MCF 10A (cell line): ENCODE measurements at regions of chr11 and their contacts with region 1.

Region 1: DNA sequence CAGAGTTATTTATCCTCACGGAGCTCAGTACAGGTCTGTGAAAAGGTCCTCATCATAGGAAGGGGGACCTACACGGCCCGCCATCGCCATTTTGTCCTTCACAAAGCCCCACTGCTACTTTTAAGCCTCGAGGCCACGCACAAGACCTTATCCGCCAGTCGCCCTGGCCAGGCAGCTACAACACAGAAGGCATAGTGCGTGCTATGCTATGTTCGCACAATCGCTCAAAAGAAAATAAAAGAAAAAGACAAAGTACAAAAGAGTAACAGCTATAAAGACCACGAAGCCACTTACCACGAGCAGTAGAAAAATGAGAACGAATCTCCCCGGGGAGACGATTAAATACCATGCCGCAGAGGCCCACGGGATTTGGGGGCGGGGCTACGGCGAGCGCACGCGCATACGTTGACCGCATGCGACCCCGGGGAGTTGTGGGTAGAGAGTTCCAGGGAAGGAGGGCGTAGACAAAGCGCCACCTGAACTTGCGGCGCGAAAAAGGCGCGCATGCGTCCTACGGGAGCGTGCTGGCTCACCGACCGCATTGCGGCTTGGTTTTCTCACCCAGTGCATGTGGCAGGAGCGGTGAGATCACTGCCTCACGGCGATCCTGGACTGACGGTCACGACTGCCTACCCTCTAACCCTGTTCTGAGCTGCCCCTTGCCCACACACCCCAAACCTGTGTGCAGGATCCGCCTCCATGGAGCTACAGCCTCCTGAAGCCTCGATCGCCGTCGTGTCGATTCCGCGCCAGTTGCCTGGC is 16.4 kb upstream of the WDR74 start:
- DNase-seq: peak; percentile 98
- H3K4me3 Mint-ChIP-seq: peak overlapping the region; percentile 94
- H3K27ac Mint-ChIP-seq: peak overlapping the region; percentile 64
- H3K4me1 Mint-ChIP-seq: peaks cover 35% of the 10 kb centered on the region
- H3K27me3 Mint-ChIP-seq: no peaks in the 10 kb centered on the region
- CTCF ChIP-seq: no peak

Region 2: GRCh38 chr11:62573592-62574362 is 282.0 kb before region 1 on chr11 and contains the start of gene EEF1G:
- CTCF ChIA-PET with region 1: no interaction called
- POLR2A ChIA-PET with region 1: interaction called, 14 read pairs
- intact Hi-C with region 1: no loop called
- DNase-seq: peak; percentile 100
- H3K4me3 Mint-ChIP-seq: peak within 1 kb of the TSS; percentile 100
- H3K27ac Mint-ChIP-seq: peak within 1 kb of the TSS; percentile 100
- H3K4me1 Mint-ChIP-seq: peaks cover 30% of the 10 kb centered on the region
- H3K27me3 Mint-ChIP-seq: no peaks in the 10 kb centered on the region
- CTCF ChIP-seq: no peak
- total RNA-seq, gene EEF1G: 1,510 and 1,855 TPM in 2 replicates

Region 3: GRCh38 chr11:62715150-62716135 is 140.3 kb before region 1 on chr11:
- CTCF ChIA-PET with region 1: no interaction called
- POLR2A ChIA-PET with region 1: no interaction called
- intact Hi-C with region 1: no loop called
- DNase-seq: no peak
- H3K4me3 Mint-ChIP-seq: no peak overlapping the region
- H3K27ac Mint-ChIP-seq: no peak overlapping the region
- H3K4me1 Mint-ChIP-seq: peaks cover 15% of the 10 kb centered on the region
- H3K27me3 Mint-ChIP-seq: no peaks in the 10 kb centered on the region
- CTCF ChIP-seq: no peak

Region 4: GRCh38 chr11:62753736-62754603 is 101.8 kb before region 1 on chr11 and contains the start of gene ZBTB3:
- CTCF ChIA-PET with region 1: no interaction called
- POLR2A ChIA-PET with region 1: interaction called, 22 read pairs
- intact Hi-C with region 1: no loop called
- DNase-seq: peak; percentile 100
- H3K4me3 Mint-ChIP-seq: peak within 1 kb of the TSS; percentile 98
- H3K27ac Mint-ChIP-seq: peak within 1 kb of the TSS; percentile 96
- H3K4me1 Mint-ChIP-seq: peaks cover 3% of the 10 kb centered on the region
- H3K27me3 Mint-ChIP-seq: no peaks in the 10 kb centered on the region
- CTCF ChIP-seq: no peak
- total RNA-seq, gene ZBTB3: 7.1 and 11.6 TPM in 2 replicates

Region 5: GRCh38 chr11:62805076-62805892 is 50.5 kb before region 1 on chr11 and contains the start of gene NXF1:
- CTCF ChIA-PET with region 1: interaction called, 3 read pairs
- POLR2A ChIA-PET with region 1: interaction called, 59 read pairs
- intact Hi-C with region 1: no loop called
- DNase-seq: peak; percentile 93
- H3K4me3 Mint-ChIP-seq: peak within 1 kb of the TSS; percentile 95
- H3K27ac Mint-ChIP-seq: peak within 1 kb of the TSS; percentile 99
- H3K4me1 Mint-ChIP-seq: peaks cover 20% of the 10 kb centered on the region
- H3K27me3 Mint-ChIP-seq: no peaks in the 10 kb centered on the region
- CTCF ChIP-seq: no peak
- total RNA-seq, gene NXF1: 47.6 and 53.3 TPM in 2 replicates

Region 6: DNA sequence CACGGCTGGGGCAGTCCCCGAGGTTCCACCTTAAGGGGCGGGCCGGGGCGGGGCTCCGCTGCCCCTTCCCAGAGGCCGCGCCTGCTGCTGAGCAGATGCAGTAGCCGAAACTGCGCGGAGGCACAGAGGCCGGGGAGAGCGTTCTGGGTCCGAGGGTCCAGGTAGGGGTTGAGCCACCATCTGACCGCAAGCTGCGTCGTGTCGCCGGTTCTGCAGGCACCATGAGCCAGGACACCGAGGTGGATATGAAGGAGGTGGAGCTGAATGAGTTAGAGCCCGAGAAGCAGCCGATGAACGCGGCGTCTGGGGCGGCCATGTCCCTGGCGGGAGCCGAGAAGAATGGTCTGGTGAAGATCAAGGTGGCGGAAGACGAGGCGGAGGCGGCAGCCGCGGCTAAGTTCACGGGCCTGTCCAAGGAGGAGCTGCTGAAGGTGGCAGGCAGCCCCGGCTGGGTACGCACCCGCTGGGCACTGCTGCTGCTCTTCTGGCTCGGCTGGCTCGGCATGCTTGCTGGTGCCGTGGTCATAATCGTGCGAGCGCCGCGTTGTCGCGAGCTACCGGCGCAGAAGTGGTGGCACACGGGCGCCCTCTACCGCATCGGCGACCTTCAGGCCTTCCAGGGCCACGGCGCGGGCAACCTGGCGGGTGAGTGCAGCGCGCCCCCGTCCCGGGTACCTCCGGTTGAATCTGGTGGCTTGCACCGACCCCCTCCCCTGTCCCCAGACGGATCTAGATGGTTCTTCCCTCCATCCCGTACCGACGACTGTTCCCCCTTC is 25.2 kb after region 1 on chr11 and contains the start of gene SLC3A2:
- CTCF ChIA-PET with region 1: interaction called, 31 read pairs
- POLR2A ChIA-PET with region 1: interaction called, 152 read pairs
- intact Hi-C with region 1: loop called (anchors 2 kb)
- DNase-seq: peak; percentile 91
- H3K4me3 Mint-ChIP-seq: peak within 1 kb of the TSS; percentile 100
- H3K27ac Mint-ChIP-seq: peak within 1 kb of the TSS; percentile 99
- H3K4me1 Mint-ChIP-seq: peaks cover 47% of the 10 kb centered on the region
- H3K27me3 Mint-ChIP-seq: no peaks in the 10 kb centered on the region
- CTCF ChIP-seq: peak; percentile 70
- total RNA-seq, gene SLC3A2: 838 and 896 TPM in 2 replicates

Region 7: GRCh38 chr11:63369165-63369970 is 513.6 kb after region 1 on chr11 and contains the start of gene SLC22A9:
- CTCF ChIA-PET with region 1: no interaction called
- POLR2A ChIA-PET with region 1: no interaction called
- intact Hi-C with region 1: no loop called
- DNase-seq: no peak
- H3K4me3 Mint-ChIP-seq: no peak within 1 kb of the TSS
- H3K27ac Mint-ChIP-seq: no peak within 1 kb of the TSS
- H3K4me1 Mint-ChIP-seq: no peaks in the 10 kb centered on the region
- H3K27me3 Mint-ChIP-seq: peaks cover 43% of the 10 kb centered on the region
- CTCF ChIP-seq: no peak
- total RNA-seq, gene SLC22A9: not detected in 2 replicates